Activated T-helper 2 cell treated with anti-CD3 and anti-CD28 coated beads, Interferon-gamma antibody, Interleukin-2, Interleukin-4, amounts not matched to agents 10 μg/mL and 5 μg/mL and 100 μg/mL, durations not matched to agents 14 hours and 24 hours and 36 hours (primary cell): ENCODE measurements at regions of chr11 and their contacts with region 1.

Region 1: GRCh38 chr11:107785401-107785800 is 73.2 kb downstream of the SLC35F2 start:
- DNase-seq: no peak
- H3K4me3 Mint-ChIP-seq: no peak overlapping the region
- H3K27ac Mint-ChIP-seq: no peak overlapping the region
- H3K4me1 Mint-ChIP-seq: peaks cover 6% of the 10 kb centered on the region
- H3K27me3 Mint-ChIP-seq: peaks cover 1% of the 10 kb centered on the region

Region 2: DNA sequence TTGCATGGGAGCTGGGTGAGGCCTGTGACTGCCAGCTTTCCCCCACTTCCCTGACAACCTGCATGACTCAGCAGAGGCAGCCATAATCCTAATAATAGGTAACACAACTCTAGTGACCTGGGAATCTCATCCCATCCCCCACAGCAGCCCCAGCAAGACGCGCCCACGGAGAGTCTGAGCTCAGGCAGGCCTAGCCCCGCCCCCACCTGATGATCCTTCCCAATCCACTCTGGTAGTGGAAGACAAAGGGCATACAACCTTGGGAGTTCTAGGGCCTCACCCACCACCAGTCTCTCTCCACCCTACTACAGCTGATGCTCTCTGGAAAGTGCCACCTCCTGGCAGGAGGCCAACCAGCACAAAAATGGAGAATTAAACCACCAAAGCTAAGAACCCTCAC is 388.0 kb before region 1 on chr11:
- intact Hi-C with region 1: no loop called
- DNase-seq: no peak
- H3K4me3 Mint-ChIP-seq: no peak overlapping the region
- H3K27ac Mint-ChIP-seq: no peak overlapping the region
- H3K4me1 Mint-ChIP-seq: no peaks in the 10 kb centered on the region
- H3K27me3 Mint-ChIP-seq: no peaks in the 10 kb centered on the region

Region 3: DNA sequence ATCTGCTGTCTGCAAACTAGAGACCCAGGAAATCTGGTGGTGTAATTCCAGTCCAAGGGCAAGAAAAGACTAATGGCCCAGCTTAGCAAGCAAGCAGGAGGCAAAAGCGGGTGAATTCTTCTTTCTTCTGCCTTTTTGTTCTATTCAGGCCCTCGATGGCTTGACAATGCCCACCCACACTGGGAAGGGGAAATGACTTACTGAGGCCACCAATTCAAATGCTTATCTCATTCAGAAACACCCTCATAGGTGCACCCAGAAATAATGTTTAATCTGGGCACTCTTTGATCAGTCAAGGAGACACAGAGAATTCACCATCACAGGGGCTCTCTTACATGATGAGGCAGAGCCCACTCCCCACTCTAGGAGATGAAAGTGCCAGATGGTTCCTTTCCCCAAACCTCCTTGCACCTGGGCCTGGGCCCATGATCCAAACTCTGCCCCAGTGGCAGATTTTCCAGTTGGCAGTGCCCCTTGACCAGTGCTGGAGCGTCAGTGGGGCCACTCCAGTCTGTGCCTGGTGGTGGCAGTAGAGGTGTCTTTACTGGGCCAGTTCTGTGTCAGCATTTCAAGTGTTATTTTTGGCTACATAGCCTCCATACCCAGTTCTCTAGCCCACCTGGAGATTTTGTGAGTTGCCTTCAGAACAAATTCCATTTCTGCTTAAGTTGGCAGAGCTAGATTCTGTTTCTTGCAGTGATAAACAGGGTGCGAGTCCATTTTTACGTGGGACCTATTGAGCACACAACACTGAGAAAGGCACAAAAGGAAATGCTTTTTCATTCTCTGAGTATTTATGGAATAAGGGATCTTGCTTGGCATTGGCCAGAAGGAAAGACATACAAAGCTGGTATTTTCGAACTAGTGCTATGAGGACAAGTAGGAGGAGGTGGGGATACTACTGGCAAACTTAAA is 186.9 kb before region 1 on chr11:
- intact Hi-C with region 1: no loop called
- DNase-seq: no peak
- H3K4me3 Mint-ChIP-seq: no peak overlapping the region
- H3K27ac Mint-ChIP-seq: no peak overlapping the region
- H3K4me1 Mint-ChIP-seq: no peaks in the 10 kb centered on the region
- H3K27me3 Mint-ChIP-seq: peaks cover 60% of the 10 kb centered on the region

Region 4: GRCh38 chr11:107769189-107769588 is 16.2 kb before region 1 on chr11:
- intact Hi-C with region 1: loop called (anchors 1 kb)
- DNase-seq: no peak
- H3K4me3 Mint-ChIP-seq: no peak overlapping the region
- H3K27ac Mint-ChIP-seq: no peak overlapping the region
- H3K4me1 Mint-ChIP-seq: peaks cover 16% of the 10 kb centered on the region
- H3K27me3 Mint-ChIP-seq: peaks cover 31% of the 10 kb centered on the region

Region 5: GRCh38 chr11:108253176-108253575 is 467.8 kb after region 1 on chr11:
- intact Hi-C with region 1: no loop called
- DNase-seq: no peak
- H3K4me3 Mint-ChIP-seq: no peak overlapping the region
- H3K27ac Mint-ChIP-seq: no peak overlapping the region
- H3K4me1 Mint-ChIP-seq: peaks cover 9% of the 10 kb centered on the region
- H3K27me3 Mint-ChIP-seq: no peaks in the 10 kb centered on the region